Activated CD4-positive, alpha-beta T cell treated with anti-CD3 and anti-CD28 coated beads for 36 hours (primary cell): ENCODE measurements at regions of chr1 and their contacts with region 1.

Region 1: GRCh38 chr1:93615582-93616150 is 66.0 kb downstream of the BCAR3 start:
- DNase-seq: peak; percentile 80
- ATAC-seq: peak; percentile 86
- H3K4me3 Mint-ChIP-seq: peak overlapping the region; percentile 15
- H3K27ac Mint-ChIP-seq: peak overlapping the region; percentile 86
- H3K4me1 Mint-ChIP-seq: peaks cover 22% of the 10 kb centered on the region
- H3K27me3 Mint-ChIP-seq: peaks cover 6% of the 10 kb centered on the region

Region 2: DNA sequence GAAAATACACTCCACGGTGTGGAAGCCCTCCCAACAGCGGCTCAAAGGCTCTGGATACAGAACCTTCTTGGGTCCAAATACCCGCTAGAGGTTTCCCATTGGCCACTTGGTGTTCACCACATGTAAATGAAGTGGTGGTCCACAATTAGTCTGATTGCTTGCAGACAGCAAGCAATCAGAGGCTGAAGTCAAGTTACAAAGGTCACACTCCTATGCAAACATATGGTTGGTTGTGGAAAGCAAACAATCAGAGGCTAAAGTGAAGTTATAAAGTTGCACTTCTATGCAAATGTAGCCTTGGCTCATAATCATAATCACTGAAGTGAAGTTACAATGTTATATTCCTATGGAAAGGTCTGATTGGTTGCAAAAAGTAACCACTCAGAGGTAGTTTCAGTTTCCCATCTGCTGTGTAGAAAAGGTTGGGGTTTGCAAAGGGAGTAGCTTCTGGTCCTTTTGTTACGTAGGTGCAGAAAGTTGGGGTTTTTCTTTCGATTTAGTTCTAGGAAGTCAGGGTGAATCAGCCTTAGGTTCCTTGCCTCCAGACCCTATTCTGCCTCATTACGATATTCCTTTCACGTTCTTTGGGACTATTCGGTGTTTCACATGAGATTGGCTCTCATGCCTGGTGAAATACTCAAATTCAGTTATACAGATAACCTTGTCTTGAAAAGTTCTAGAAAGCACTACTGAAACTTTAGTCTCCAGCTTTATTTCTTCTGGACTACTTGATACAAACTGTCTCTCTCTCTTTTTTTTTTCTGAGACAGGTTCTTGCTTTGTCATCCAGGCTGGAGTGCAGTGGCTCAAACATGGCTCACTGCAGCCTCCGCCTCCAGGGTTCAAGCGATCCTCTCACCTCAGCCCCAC is 573.2 kb before region 1 on chr1:
- CTCF ChIA-PET with region 1: no interaction called
- POLR2A ChIA-PET with region 1: no interaction called
- intact Hi-C with region 1: loop called in 1 of 2 experiments (anchors 10 kb)
- DNase-seq: peak; percentile 20
- ATAC-seq: peak; percentile 98
- H3K4me3 Mint-ChIP-seq: peak overlapping the region; percentile 56
- H3K27ac Mint-ChIP-seq: peak overlapping the region; percentile 92
- H3K4me1 Mint-ChIP-seq: peaks cover 30% of the 10 kb centered on the region
- H3K27me3 Mint-ChIP-seq: no peaks in the 10 kb centered on the region

Region 3: DNA sequence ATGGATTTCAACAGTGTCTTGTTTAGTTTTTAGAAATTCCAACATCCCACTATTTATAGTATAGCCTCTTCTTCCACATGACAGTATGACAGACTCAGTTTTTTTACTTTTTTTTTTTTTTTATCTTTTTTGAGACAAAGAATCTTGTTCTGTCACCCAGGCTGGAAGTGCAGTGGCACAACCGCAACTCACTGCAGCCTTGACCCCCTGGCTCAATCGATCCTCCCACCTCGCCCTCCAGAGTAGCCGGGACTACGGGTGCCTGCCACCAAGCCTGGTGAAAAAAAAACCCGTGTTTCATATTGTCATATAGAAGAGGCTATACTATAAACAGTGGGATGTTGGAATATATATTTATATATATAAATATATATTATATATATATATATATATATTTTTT is 271.2 kb before region 1 on chr1:
- CTCF ChIA-PET with region 1: no interaction called
- POLR2A ChIA-PET with region 1: no interaction called
- intact Hi-C with region 1: no loop called
- DNase-seq: no peak
- ATAC-seq: no peak
- H3K4me3 Mint-ChIP-seq: peak overlapping the region; percentile 97
- H3K27ac Mint-ChIP-seq: no peak overlapping the region
- H3K4me1 Mint-ChIP-seq: peaks cover 12% of the 10 kb centered on the region
- H3K27me3 Mint-ChIP-seq: no peaks in the 10 kb centered on the region

Region 4: GRCh38 chr1:93437976-93438605 is 177.6 kb before region 1 on chr1:
- CTCF ChIA-PET with region 1: interaction called, 3 read pairs
- POLR2A ChIA-PET with region 1: no interaction called
- intact Hi-C with region 1: loop called (anchors 1 to 5 kb)
- DNase-seq: no peak
- ATAC-seq: no peak
- H3K4me3 Mint-ChIP-seq: no peak overlapping the region
- H3K27ac Mint-ChIP-seq: no peak overlapping the region
- H3K4me1 Mint-ChIP-seq: no peaks in the 10 kb centered on the region
- H3K27me3 Mint-ChIP-seq: peaks cover 2% of the 10 kb centered on the region

Region 5: DNA sequence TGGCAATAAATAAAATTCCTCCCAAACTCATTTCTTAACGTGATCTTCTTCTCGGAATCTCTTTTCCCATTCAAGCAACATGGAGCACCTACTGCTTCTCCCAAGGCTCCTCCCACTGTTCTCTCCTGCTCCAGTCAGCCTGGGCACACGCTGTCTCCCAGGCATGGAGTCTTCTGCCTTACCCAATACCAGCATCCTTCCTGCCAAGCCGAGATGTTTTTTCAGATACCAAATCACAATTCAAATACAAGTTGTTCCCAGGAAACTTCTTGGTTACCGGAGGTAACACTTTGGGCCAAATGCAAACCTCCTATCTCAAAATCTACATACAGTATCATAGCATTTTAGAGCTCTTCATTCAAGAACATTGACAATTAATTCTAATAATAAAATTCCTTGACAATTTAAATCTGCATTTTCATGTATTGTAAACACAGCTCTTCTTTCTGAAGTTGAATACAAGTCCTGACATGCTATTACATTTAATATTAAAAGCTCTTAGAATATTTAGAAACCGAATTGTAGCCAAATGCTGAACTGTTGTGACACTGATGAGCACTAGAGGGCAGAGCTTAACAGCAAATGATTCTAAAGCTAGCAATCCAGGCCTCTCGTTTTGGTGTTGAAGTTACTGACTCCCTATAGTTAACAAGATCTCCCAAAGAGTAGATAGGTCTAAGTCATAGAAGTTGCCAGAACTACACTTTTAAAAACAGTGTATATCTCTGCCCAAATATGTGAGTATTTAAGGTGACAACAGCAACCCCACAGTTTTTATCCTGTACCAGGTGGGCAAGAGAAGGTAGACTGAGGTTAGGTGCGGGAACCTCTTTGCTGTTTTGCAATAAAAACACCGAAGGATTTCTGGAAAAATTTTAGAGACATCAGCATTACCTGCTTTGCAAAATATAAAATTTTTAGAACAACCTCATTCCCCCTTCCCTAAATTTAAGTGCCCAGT is 13.7 kb after region 1 on chr1:
- CTCF ChIA-PET with region 1: interaction called, 36 read pairs
- POLR2A ChIA-PET with region 1: no interaction called
- intact Hi-C with region 1: no loop called
- DNase-seq: peak; percentile 56
- ATAC-seq: peak; percentile 78
- H3K4me3 Mint-ChIP-seq: no peak overlapping the region
- H3K27ac Mint-ChIP-seq: no peak overlapping the region
- H3K4me1 Mint-ChIP-seq: no peaks in the 10 kb centered on the region
- H3K27me3 Mint-ChIP-seq: no peaks in the 10 kb centered on the region

Region 6: GRCh38 chr1:93638981-93639380 is 23.3 kb after region 1 on chr1:
- CTCF ChIA-PET with region 1: no interaction called
- POLR2A ChIA-PET with region 1: no interaction called
- intact Hi-C with region 1: loop called in 1 of 2 experiments (anchors 1 kb)
- DNase-seq: no peak
- ATAC-seq: no peak
- H3K4me3 Mint-ChIP-seq: no peak overlapping the region
- H3K27ac Mint-ChIP-seq: no peak overlapping the region
- H3K4me1 Mint-ChIP-seq: peaks cover 16% of the 10 kb centered on the region
- H3K27me3 Mint-ChIP-seq: no peaks in the 10 kb centered on the region